ENCODE measurements at regions of chr16 and their contacts with region 1.

Region 1: DNA sequence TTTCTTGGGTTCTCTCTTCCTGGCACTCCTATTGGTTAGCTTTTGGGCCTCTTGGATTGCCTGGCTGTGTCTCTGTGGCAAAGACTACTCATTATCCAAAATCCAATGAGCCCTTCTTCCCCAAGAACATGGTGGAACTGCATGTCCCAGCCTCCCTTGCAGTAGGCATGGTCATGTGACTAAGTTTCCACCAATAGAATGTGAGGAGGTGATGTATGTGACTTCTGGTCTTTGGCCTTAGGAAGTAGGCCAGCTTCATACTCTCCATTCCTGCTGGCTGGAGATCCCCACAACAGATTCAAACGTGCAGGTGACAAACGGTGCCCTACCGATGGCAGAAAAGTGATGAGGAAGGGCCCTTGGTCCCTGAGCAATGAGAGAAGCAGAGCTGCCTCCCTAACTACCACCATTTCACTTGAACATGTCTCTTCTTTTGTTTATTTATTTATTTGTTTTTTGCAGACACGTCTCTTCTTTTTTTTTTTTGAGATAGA is 17.3 kb upstream of the SPN start:
- DNase-seq: peak; percentile 79 to 87 (median 87)
- ATAC-seq: peak; percentile 94
- H3K4me3 ChIP-seq: no peak overlapping the region
- H3K27ac ChIP-seq: peak overlapping the region; percentile 66
- H3K4me1 ChIP-seq: peaks cover 29 to 35% of the 10 kb centered on the region in 2 experiments
- H3K27me3 ChIP-seq: no peaks in the 10 kb centered on the region
- CTCF ChIP-seq: no peak
- EP300 ChIP-seq: no peak
- POLR2A ChIP-seq: no peak
- RAD21 ChIP-seq: no peak

Region 2: DNA sequence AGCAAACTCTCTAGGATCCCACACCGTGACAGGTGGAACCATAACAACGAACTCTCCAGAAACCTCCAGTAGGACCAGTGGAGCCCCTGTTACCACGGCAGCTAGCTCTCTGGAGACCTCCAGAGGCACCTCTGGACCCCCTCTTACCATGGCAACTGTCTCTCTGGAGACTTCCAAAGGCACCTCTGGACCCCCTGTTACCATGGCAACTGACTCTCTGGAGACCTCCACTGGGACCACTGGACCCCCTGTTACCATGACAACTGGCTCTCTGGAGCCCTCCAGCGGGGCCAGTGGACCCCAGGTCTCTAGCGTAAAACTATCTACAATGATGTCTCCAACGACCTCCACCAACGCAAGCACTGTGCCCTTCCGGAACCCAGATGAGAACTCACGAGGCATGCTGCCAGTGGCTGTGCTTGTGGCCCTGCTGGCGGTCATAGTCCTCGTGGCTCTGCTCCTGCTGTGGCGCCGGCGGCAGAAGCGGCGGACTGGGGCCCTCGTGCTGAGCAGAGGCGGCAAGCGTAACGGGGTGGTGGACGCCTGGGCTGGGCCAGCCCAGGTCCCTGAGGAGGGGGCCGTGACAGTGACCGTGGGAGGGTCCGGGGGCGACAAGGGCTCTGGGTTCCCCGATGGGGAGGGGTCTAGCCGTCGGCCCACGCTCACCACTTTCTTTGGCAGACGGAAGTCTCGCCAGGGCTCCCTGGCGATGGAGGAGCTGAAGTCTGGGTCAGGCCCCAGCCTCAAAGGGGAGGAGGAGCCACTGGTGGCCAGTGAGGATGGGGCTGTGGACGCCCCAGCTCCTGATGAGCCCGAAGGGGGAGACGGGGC is 18.6 kb after region 1 on chr16:
- CTCF ChIA-PET with region 1: no interaction called
- POLR2A ChIA-PET with region 1: interaction called, 6 read pairs
- in situ Hi-C with region 1: no loop called
- intact Hi-C with region 1: loop called (anchors 2 kb)
- DNase-seq: peak; percentile 74 to 84 (median 80)
- ATAC-seq: peak; percentile 33
- H3K4me3 ChIP-seq: peak overlapping the region; percentile 60
- H3K27ac ChIP-seq: peak overlapping the region; percentile 93
- H3K4me1 ChIP-seq: peaks cover 31 to 52% of the 10 kb centered on the region in 2 experiments
- H3K27me3 ChIP-seq: no peaks in the 10 kb centered on the region
- CTCF ChIP-seq: peak in 2 of 3 experiments; percentile 31 to 40; a peak in 3 of 6 replicates
- EP300 ChIP-seq: no peak
- POLR2A ChIP-seq: no peak
- RAD21 ChIP-seq: no peak

Region 3: GRCh38 chr16:29678691-29679267 is 33.0 kb after region 1 on chr16 and contains the start of gene QPRT:
- CTCF ChIA-PET with region 1: no interaction called
- POLR2A ChIA-PET with region 1: interaction called, 5 read pairs
- in situ Hi-C with region 1: no loop called
- intact Hi-C with region 1: loop called (anchors 5 kb)
- DNase-seq: peak; percentile 86 to 93 (median 90)
- ATAC-seq: peak; percentile 91
- H3K4me3 ChIP-seq: peak within 1 kb of the TSS; percentile 62
- H3K27ac ChIP-seq: peak within 1 kb of the TSS; percentile 82
- H3K4me1 ChIP-seq: peaks cover 23 to 57% of the 10 kb centered on the region in 2 experiments
- H3K27me3 ChIP-seq: no peaks in the 10 kb centered on the region
- CTCF ChIP-seq: no peak
- EP300 ChIP-seq: no peak
- POLR2A ChIP-seq: peak; percentile 69
- RAD21 ChIP-seq: no peak
- polyA plus RNA-seq, gene QPRT: 7.7 to 10.8 TPM

Region 4: GRCh38 chr16:29700253-29700987 is 54.7 kb after region 1 on chr16:
- CTCF ChIA-PET with region 1: no interaction called
- POLR2A ChIA-PET with region 1: no interaction called
- in situ Hi-C with region 1: no loop called
- intact Hi-C with region 1: no loop called
- DNase-seq: peak; percentile 83 to 91 (median 84)
- ATAC-seq: peak; percentile 89
- H3K4me3 ChIP-seq: no peak overlapping the region
- H3K27ac ChIP-seq: no peak overlapping the region
- H3K4me1 ChIP-seq: peaks cover 24% of the 10 kb centered on the region in 2 experiments
- H3K27me3 ChIP-seq: no peaks in the 10 kb centered on the region
- CTCF ChIP-seq: peak; percentile 88 to 95 (median 93)
- EP300 ChIP-seq: no peak
- POLR2A ChIP-seq: no peak
- RAD21 ChIP-seq: peak; percentile 68 to 89

Region 5: DNA sequence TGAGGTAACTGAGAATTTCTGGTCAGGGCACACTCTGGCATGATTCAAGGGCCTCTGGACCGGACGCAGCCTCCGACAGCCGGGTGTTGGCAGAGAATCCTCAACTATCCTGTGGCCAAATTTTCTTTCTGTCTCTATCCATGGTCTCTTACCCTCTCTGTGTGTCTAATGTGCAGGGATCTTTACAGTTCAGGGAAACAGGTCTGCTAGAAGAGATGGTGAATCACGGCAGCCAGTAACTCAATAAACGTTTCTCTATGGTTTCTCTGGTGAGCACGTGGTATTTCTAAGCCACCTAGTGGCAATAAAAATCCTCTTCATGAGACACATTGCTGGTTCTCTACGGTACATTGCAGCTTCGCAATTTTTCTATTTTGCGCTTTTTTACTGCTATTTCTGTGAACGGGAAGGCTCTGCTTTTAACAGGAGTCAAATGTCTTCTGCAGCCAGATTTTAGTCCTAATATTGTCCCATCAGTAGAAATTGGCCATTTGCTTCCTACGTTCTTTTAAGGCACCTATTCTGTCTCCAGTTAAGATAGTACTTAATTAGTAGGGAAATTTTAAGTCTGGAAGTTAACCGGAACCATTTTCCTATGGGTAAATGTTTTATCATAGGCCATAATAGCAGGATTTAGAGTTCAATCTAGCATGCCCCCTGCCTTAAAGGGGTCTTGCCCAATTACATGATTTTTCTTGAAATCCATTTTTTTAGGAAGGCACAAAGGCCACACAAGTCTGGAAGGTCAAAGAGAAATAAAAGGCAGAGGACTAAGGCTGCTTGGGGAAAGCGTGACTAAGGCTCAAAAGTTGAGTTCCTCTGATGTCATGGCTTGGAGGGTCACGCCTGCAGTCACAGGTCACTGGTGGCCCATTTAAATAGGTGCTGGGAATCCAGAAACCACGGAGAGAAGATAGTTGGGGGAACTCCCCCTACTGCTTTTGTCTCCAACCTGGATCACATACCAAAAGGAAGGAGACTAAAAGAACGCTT is 64.8 kb after region 1 on chr16:
- CTCF ChIA-PET with region 1: interaction called, 3 read pairs
- POLR2A ChIA-PET with region 1: no interaction called
- in situ Hi-C with region 1: no loop called
- intact Hi-C with region 1: loop called (anchors 5 kb)
- DNase-seq: peak; percentile 37 to 77 (median 50)
- ATAC-seq: peak; percentile 91
- H3K4me3 ChIP-seq: no peak overlapping the region
- H3K27ac ChIP-seq: peak overlapping the region; percentile 29; the same call in 1 of the 3 replicates
- H3K4me1 ChIP-seq: peaks cover 8 to 17% of the 10 kb centered on the region in 2 experiments
- H3K27me3 ChIP-seq: no peaks in the 10 kb centered on the region
- CTCF ChIP-seq: peak; percentile 68 to 77 (median 72)
- EP300 ChIP-seq: no peak
- POLR2A ChIP-seq: no peak
- RAD21 ChIP-seq: peak; percentile 59 to 67